A673 (cell line): ENCODE measurements at regions of chr1 and their contacts with region 1.

Region 1: GRCh38 chr1:105516068-105516467 is 1540.4 kb upstream of the PRMT6 start:
- DNase-seq: no peak
- H3K4me3 ChIP-seq: no peak overlapping the region
- H3K27ac ChIP-seq: no peak overlapping the region
- H3K4me1 ChIP-seq: no peaks in the 10 kb centered on the region
- H3K27me3 ChIP-seq: no peaks in the 10 kb centered on the region
- CTCF ChIP-seq: no peak

Region 2: DNA sequence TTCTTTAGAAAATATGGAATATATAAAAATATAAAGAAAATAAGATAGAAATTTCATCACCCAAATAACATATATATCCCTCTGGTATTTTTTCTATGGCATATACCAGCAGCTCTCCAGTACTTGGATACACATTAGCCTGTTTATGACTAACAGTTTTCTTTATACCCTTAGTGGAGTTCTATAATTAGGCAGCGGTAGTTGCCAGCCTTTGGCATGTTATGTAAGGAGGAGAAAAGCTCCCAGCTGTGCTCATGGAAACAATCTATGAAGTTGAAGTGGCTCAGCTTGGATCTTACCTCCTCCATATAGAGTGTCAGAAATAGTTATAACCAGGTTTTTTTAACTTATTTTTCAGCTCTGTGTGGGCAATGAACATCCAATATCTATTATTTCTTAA is 129.6 kb before region 1 on chr1:
- CTCF ChIA-PET with region 1: no interaction called
- POLR2A ChIA-PET with region 1: no interaction called
- intact Hi-C with region 1: no loop called
- DNase-seq: no peak
- H3K4me3 ChIP-seq: no peak overlapping the region
- H3K27ac ChIP-seq: no peak overlapping the region
- H3K4me1 ChIP-seq: no peaks in the 10 kb centered on the region
- H3K27me3 ChIP-seq: no peaks in the 10 kb centered on the region
- CTCF ChIP-seq: no peak

Region 3: DNA sequence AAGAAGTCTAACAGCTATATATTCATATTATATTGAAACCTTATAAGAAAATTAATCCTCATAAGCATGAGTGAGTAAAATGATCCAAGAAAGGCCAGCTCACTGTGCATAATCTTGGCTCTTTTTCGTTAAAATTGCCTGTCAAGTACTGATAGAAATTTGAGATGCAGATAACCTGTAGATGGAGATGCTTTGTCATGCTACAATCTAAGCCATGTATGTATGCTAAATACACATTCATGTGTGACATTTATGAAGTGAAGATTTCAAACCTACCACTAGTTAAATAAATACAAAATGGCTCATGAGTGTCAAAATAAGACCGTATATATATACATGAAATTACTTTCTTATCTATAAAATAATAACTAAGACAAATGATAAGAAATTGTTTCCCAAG is 48.9 kb after region 1 on chr1:
- CTCF ChIA-PET with region 1: no interaction called
- POLR2A ChIA-PET with region 1: no interaction called
- intact Hi-C with region 1: loop called (anchors 5 kb)
- DNase-seq: no peak
- H3K4me3 ChIP-seq: no peak overlapping the region
- H3K27ac ChIP-seq: no peak overlapping the region
- H3K4me1 ChIP-seq: no peaks in the 10 kb centered on the region
- H3K27me3 ChIP-seq: no peaks in the 10 kb centered on the region
- CTCF ChIP-seq: no peak

Region 4: DNA sequence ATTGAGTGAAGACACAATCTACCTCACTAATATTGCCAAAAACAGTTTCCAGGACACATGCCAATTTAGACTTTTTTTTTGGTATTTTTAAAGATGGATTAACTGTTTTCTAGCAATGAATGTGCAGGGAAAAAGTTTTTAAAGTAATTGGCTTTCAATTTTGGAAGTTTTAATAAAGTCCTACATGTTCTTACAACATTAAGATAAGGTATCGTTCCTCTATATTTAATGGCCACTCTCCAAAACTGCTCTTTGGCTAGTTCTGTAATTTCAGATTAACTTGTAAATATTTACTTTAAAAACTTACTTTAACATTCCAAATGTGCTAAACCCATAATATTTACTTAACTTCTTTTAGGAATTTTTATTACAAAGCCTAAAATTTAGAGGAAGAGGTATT is 208.2 kb after region 1 on chr1:
- CTCF ChIA-PET with region 1: no interaction called
- POLR2A ChIA-PET with region 1: no interaction called
- intact Hi-C with region 1: no loop called
- DNase-seq: no peak
- H3K4me3 ChIP-seq: no peak overlapping the region
- H3K27ac ChIP-seq: no peak overlapping the region
- H3K4me1 ChIP-seq: no peaks in the 10 kb centered on the region
- H3K27me3 ChIP-seq: no peaks in the 10 kb centered on the region
- CTCF ChIP-seq: no peak

Region 5: DNA sequence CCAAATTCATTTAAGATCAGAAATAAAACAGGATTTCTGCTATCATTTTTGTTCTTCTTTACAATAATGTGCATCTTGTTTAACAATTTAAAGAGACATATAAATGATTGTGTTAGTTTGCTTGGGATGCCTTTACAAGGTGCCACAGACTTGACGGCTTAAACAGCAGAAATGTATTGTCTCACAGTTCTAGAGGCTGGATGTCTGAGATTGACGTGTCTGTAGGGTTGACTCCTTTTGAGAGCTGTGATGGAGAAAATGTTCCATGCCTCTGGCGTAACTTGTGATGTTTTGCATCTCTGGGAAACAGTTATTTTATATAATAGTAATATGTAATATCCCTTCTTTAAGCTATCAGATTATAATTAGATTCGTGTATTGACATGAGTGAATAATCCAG is 448.8 kb after region 1 on chr1:
- CTCF ChIA-PET with region 1: no interaction called
- POLR2A ChIA-PET with region 1: no interaction called
- intact Hi-C with region 1: no loop called
- DNase-seq: no peak
- H3K4me3 ChIP-seq: no peak overlapping the region
- H3K27ac ChIP-seq: no peak overlapping the region
- H3K4me1 ChIP-seq: no peaks in the 10 kb centered on the region
- H3K27me3 ChIP-seq: no peaks in the 10 kb centered on the region
- CTCF ChIP-seq: no peak